Activated CD8-positive, alpha-beta memory T cell treated with anti-CD3 and anti-CD28 coated beads, Interleukin-2, amount 10 ng/mL, durations not matched to agents 7 days and 5 days (primary cell): ENCODE measurements at regions of chr17 and their contacts with region 1.

Region 1: DNA sequence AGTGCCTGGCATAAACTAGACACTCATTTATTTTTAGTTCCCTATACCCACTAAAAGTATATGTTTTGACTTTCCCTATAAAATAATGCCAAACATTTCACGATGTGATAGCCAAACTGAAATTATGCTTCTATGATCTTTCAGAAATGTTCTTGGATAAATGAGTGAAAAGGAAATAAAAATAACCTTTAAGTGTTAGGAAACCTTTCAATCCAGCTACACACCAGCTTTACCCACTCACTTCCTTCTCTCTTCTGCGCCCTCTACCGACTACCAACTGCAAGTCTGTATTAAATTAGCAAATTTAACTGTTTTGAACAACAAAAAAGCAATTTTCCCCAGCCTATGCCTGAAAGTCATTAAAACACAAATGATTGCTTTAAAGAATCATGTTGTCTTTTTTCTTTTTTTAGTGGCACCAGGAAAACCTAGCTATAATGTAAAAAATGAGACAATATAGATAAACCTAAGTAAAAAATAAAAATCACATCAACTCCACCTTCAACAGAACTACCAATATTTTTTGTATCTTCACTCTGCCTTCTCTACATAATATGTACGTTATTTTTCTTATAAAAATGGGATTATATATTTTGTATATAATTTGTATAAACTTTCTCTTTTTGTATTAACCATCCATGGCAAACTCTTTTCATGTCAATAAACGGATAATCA is 13.2 kb upstream of the TMEM100 start:
- DNase-seq: peak; percentile 54
- ATAC-seq: no peak
- H3K4me3 Mint-ChIP-seq: no peak overlapping the region
- H3K27ac Mint-ChIP-seq: no peak overlapping the region
- H3K4me1 Mint-ChIP-seq: peaks cover 13% of the 10 kb centered on the region
- H3K27me3 Mint-ChIP-seq: peaks cover 41% of the 10 kb centered on the region

Region 2: DNA sequence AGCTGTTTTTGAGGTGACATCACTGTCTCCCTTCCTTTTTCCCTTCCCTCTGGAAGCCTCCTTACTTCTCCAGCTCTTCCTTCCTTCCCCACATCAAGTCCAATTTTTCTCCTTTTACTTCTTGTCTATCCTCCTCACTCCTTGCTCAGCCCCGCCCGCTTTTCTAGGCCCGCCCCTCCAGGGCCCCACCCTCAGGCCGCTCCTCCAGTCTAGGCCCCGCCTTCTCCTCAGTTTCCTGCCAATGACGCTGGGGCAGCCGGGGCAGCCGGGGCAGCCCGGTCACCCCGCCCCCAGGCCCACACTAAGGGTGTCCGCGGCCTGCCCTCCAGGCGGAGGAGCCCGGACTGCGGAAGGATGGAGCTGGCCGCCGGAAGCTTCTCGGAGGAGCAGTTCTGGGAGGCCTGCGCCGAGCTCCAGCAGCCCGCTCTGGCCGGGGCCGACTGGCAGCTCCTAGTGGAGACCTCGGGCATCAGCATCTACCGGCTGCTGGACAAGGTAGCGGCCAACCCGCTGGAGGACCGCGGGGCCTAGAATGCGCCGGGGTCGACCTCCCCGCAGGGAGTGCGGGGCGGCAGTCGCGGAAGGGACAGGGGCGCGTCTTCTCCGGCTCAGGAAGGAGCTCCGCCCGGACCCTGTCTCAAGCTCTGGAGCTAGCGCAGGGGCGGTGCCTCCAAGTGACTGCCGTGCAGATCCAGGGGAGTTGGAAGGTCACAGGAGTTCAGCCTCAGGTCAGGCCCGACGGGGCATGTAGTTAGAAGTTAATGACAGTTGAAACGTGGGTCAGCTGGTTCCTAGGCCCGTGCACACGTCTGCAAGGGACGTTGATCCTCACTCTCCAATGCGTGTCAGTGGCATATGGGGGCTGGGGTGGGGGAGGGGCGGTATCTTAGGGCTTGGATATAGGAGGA is 15.1 kb after region 1 on chr17 and contains the start of gene PCTP:
- CTCF ChIA-PET with region 1: interaction called, 13 read pairs
- DNase-seq: peak; percentile 92
- ATAC-seq: peak; percentile 100
- H3K4me3 Mint-ChIP-seq: peak within 1 kb of the TSS; percentile 73
- H3K27ac Mint-ChIP-seq: peak within 1 kb of the TSS; percentile 61
- H3K4me1 Mint-ChIP-seq: peaks cover 13% of the 10 kb centered on the region
- H3K27me3 Mint-ChIP-seq: peaks cover 39% of the 10 kb centered on the region
- total RNA-seq, gene PCTP: 6.4 to 9.9 TPM

Region 3: DNA sequence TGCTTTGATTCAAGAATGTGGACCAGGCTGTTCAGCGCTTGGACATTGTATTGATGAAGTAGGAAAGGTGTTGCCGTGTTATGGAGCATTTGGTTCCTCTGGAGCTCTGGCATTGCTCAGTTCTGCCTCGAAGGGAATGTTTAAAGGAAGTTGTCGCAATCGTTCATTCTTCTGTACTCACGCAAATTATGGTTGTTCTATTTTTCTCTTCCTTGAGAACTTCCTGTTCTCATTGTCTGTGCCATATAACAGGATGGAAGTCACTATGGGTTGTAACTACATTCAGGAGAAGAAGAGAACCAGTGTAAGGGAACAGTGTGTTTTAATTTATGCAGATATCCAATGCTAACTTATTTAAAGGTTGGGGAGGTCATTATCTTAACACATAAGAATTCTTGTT is 28.0 kb after region 1 on chr17:
- CTCF ChIA-PET with region 1: no interaction called
- DNase-seq: no peak
- ATAC-seq: no peak
- H3K4me3 Mint-ChIP-seq: no peak overlapping the region
- H3K27ac Mint-ChIP-seq: no peak overlapping the region
- H3K4me1 Mint-ChIP-seq: no peaks in the 10 kb centered on the region
- H3K27me3 Mint-ChIP-seq: no peaks in the 10 kb centered on the region